Right ventricle myocardium inferior (tissue), 1 donor: ENCODE measurements at regions of chr9 and their contacts with region 1.

Region 1: DNA sequence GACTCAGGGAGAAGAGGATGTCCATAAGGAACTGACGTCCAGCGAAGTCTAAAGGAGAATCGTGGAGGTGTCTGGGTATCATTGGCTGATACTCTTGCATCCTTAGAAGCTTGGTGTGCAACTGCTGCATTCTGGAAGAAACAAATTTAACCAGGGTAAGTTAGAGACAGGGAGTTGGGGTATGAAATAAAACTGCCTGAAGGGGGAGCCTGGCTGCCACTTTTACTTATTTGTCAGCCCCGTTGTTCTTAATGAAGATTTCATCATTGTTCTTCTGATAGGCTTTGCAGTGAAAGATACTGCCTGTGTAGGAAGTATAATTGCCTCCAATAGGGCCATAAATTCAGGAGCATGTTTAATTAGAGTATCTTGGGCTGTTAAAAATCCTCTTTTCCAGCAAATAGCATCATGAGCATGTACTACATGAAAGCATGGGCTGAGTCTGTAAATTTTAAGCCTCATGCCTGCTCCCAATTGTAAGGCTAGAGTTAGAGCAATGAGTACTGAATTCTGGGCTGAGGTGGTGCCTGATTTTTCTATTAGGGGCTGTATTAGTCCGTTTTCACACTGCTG is 1264.5 kb upstream of the ACO1 start:
- DNase-seq: no peak
- ATAC-seq: no peak

Region 2: GRCh38 chr9:31304576-31304975 is 184.6 kb after region 1 on chr9:
- intact Hi-C with region 1: loop called (anchors 5 kb)
- DNase-seq: no peak
- ATAC-seq: no peak

Region 3: GRCh38 chr9:31542384-31543055 is 422.6 kb after region 1 on chr9:
- intact Hi-C with region 1: loop called (anchors 10 kb)
- DNase-seq: no peak
- ATAC-seq: peak; percentile 93

Region 4: DNA sequence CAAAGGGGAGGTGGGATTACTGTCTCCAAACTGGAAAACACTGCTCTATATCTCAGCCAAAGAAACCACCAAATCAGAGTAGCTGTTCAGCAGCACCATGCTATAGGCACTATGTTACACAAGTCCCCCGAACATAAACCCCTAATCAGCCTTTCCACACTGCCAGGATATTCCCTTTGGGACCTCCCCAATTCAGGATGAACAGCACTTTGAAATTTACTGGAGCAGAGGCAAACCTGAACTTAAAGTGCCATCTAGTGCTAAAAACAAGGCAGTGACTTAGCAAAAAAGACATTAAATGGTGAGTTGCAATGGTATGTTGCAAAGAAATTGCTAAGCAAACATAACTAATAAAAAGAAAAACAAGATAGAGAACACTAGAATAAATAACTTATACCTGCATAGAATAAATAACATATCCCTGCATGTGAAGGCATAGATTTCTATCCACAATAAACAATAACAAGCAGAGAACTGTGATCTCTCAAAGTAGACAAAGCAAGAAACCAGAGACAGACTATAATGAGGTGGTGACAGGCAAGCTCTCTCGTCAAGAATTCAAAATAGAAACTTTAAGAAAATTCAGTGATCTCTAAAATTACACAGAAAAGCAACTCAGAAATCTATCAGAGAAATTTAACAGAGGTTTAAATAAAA is 680.1 kb after region 1 on chr9:
- intact Hi-C with region 1: loop called (anchors 5 kb)
- DNase-seq: no peak
- ATAC-seq: no peak